ENCODE measurements at regions of chr6 and their contacts with region 1.

Region 1: DNA sequence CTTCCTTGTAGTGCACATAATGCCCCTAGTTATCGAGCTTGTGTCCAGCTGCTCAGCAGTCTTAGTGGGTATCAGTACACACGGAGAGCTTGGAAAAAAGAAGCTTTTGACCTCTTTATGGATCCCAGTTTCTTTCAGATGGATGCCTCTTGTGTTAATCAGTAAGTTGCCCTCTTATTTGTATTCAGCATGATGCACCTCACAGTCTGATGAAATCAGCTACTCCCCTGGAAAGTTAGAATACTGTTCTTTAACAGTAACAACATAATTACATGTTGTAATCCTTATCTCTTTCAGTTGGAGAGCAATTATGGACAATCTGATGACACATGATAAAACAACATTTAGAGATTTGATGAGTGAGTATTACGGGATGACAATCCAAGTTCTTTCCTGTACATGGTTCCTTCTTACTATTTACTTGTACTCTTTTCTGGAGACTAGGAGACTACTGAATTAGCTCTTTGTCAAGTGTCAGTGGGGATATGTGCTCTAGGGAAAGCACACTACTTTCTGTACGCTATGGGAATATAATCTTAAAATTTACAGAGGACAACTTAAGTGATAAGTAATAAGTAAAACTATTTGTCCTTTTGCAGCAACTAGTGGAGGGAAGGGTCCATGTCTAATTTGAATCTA is 39.1 kb downstream of the PGM3 start:
- DNase-seq: no peak
- ATAC-seq: no peak
- H3K4me3 ChIP-seq: no peak overlapping the region
- H3K27ac ChIP-seq: no peak overlapping the region
- H3K4me1 ChIP-seq: peaks cover 0 to 14% (median 0%) of the 10 kb centered on the region in 9 donors
- H3K27me3 ChIP-seq: no peaks in the 10 kb centered on the region
- CTCF ChIP-seq: no peak

Region 2: DNA sequence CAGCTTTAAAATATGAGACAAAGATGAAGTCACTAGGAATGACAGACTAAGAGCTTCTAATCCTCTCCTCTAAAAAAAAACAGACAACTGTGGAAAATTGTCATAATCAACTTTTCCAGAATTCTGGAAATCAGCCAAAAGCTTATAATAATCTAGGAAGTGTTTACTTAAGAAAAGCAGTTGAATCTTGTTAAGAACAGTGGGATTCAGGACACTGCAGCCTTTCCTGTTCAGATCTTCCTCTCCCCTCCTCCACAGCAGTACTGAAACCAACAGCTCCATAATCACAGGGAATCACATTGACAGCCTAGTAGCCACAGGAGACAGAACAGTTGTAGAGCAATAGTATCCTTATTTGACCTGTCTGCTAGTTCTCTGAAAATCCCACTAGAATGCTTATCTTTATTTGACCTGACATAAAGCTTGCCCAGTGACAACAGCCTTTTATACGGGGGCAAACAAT is 948.0 kb before region 1 on chr6:
- intact Hi-C with region 1: loop called in 2 of 10 experiments (anchors 10 kb)
- DNase-seq: peak in 1 of 2 donors; percentile 17
- ATAC-seq: peak; percentile 86 to 95 (median 92)
- H3K4me3 ChIP-seq: no peak overlapping the region
- H3K27ac ChIP-seq: peak overlapping the region in 7 of 10 donors; percentile 27 to 65 (median 42)
- H3K4me1 ChIP-seq: peaks cover 0 to 23% (median 18%) of the 10 kb centered on the region in 9 donors
- H3K27me3 ChIP-seq: no peaks in the 10 kb centered on the region
- CTCF ChIP-seq: no peak

Region 3: GRCh38 chr6:82217018-82217586 is 936.9 kb before region 1 on chr6:
- intact Hi-C with region 1: loop called in 1 of 10 experiments (anchors 10 kb)
- DNase-seq: no peak
- ATAC-seq: no peak
- H3K4me3 ChIP-seq: no peak overlapping the region
- H3K27ac ChIP-seq: no peak overlapping the region
- H3K4me1 ChIP-seq: no peaks in the 10 kb centered on the region
- H3K27me3 ChIP-seq: no peaks in the 10 kb centered on the region
- CTCF ChIP-seq: no peak

Region 4: GRCh38 chr6:83169511-83169910 is 15.5 kb after region 1 on chr6:
- intact Hi-C with region 1: no loop called
- DNase-seq: no peak
- ATAC-seq: no peak
- H3K4me3 ChIP-seq: no peak overlapping the region
- H3K27ac ChIP-seq: no peak overlapping the region
- H3K4me1 ChIP-seq: no peaks in the 10 kb centered on the region
- H3K27me3 ChIP-seq: no peaks in the 10 kb centered on the region
- CTCF ChIP-seq: no peak